Caco-2 (cell line): ENCODE measurements at regions of chr5 and their contacts with region 1.

Region 1: GRCh38 chr5:73783828-73784227 is 157.8 kb downstream of the ARHGEF28 start:
- DNase-seq: no peak
- H3K4me3 ChIP-seq: no peak overlapping the region
- H3K4me3 Mint-ChIP-seq: no peak overlapping the region
- H3K27ac Mint-ChIP-seq: no peak overlapping the region
- H3K4me1 ChIP-seq: no peaks in the 10 kb centered on the region
- H3K4me1 Mint-ChIP-seq: no peaks in the 10 kb centered on the region
- H3K27me3 ChIP-seq: no peaks in the 10 kb centered on the region
- H3K27me3 Mint-ChIP-seq: no peaks in the 10 kb centered on the region
- CTCF ChIP-seq: peak in 1 of 2 experiments; percentile 40

Region 2: GRCh38 chr5:73354406-73354805 is 429.4 kb before region 1 on chr5:
- CTCF ChIA-PET with region 1: no interaction called
- POLR2A ChIA-PET with region 1: no interaction called
- intact Hi-C with region 1: no loop called
- DNase-seq: no peak
- H3K4me3 ChIP-seq: no peak overlapping the region
- H3K4me3 Mint-ChIP-seq: no peak overlapping the region
- H3K27ac Mint-ChIP-seq: no peak overlapping the region
- H3K4me1 ChIP-seq: no peaks in the 10 kb centered on the region
- H3K4me1 Mint-ChIP-seq: no peaks in the 10 kb centered on the region
- H3K27me3 ChIP-seq: no peaks in the 10 kb centered on the region; the same call in 1 of the 2 replicates
- H3K27me3 Mint-ChIP-seq: peaks cover 15% of the 10 kb centered on the region
- CTCF ChIP-seq: no peak

Region 3: GRCh38 chr5:73722231-73722630 is 61.6 kb before region 1 on chr5:
- CTCF ChIA-PET with region 1: no interaction called
- POLR2A ChIA-PET with region 1: no interaction called
- intact Hi-C with region 1: loop called (anchors 10 kb)
- DNase-seq: no peak
- H3K4me3 ChIP-seq: no peak overlapping the region
- H3K4me3 Mint-ChIP-seq: no peak overlapping the region
- H3K27ac Mint-ChIP-seq: no peak overlapping the region
- H3K4me1 ChIP-seq: no peaks in the 10 kb centered on the region
- H3K4me1 Mint-ChIP-seq: no peaks in the 10 kb centered on the region
- H3K27me3 ChIP-seq: no peaks in the 10 kb centered on the region
- H3K27me3 Mint-ChIP-seq: peaks cover 4% of the 10 kb centered on the region
- CTCF ChIP-seq: no peak

Region 4: DNA sequence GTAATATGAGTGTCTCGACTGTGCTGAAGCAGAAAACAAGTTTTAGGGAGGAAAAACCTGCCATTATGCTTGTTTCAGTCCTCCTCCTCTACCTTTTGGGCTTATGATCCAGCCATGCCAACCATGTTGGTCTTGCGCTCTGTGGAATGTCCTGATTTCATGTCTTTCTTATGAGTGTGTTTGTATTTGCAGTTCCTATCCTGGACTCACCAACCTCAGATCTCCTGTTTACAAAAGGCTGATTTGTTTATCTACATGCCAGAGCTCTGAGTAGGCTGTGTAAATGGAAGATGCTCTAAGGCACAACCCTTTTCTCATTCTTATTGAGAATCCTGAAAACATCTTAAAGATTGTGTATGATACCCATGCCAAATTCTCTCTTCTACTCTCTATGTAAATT is 19.2 kb before region 1 on chr5:
- CTCF ChIA-PET with region 1: no interaction called
- POLR2A ChIA-PET with region 1: no interaction called
- intact Hi-C with region 1: no loop called
- DNase-seq: no peak
- H3K4me3 ChIP-seq: no peak overlapping the region
- H3K4me3 Mint-ChIP-seq: no peak overlapping the region
- H3K27ac Mint-ChIP-seq: peak overlapping the region; percentile 5
- H3K4me1 ChIP-seq: no peaks in the 10 kb centered on the region
- H3K4me1 Mint-ChIP-seq: no peaks in the 10 kb centered on the region
- H3K27me3 ChIP-seq: no peaks in the 10 kb centered on the region
- H3K27me3 Mint-ChIP-seq: no peaks in the 10 kb centered on the region
- CTCF ChIP-seq: no peak

Region 5: DNA sequence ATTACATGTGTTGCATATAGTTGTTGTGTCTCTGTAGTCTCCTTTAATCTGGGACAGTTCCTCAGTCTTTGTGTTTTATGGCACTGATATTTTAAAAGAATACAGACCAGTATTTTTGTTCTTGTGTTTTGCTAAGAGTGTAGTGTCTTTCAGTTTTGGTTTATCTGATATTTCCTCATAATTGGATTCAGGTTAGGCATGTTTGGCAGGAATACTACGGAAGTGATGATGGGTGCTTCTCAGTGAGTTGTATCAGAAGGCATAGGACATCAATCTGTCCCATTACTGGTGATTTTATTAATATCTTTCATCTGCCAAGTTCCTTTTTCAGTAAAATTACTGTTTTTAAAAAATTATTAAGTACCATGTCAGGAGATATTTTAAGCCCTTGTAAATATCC is 55.1 kb after region 1 on chr5:
- CTCF ChIA-PET with region 1: no interaction called
- POLR2A ChIA-PET with region 1: no interaction called
- intact Hi-C with region 1: no loop called
- DNase-seq: no peak
- H3K4me3 ChIP-seq: no peak overlapping the region
- H3K4me3 Mint-ChIP-seq: no peak overlapping the region
- H3K27ac Mint-ChIP-seq: no peak overlapping the region
- H3K4me1 ChIP-seq: no peaks in the 10 kb centered on the region
- H3K4me1 Mint-ChIP-seq: no peaks in the 10 kb centered on the region
- H3K27me3 ChIP-seq: no peaks in the 10 kb centered on the region
- H3K27me3 Mint-ChIP-seq: no peaks in the 10 kb centered on the region
- CTCF ChIP-seq: no peak

Region 6: DNA sequence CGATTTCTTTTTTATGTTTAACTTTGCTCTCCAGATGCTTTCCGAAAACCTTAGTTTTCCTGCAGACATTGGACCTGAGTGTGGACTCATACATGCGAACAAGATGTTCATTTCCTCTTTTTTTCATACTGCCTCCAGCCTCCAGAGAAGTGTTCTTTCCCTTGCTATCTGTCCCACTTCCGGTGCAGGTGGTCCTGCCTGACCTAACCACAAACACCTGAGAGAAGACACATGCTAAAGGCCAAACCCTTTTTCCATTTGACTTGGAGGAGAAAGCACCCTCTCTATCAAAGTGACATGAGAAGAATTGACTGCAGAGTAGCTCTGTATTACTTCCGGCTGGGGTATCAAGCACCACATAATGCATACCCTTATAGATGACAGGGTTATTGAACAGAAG is 176.2 kb after region 1 on chr5:
- CTCF ChIA-PET with region 1: no interaction called
- POLR2A ChIA-PET with region 1: no interaction called
- intact Hi-C with region 1: no loop called
- DNase-seq: no peak
- H3K4me3 ChIP-seq: no peak overlapping the region
- H3K4me3 Mint-ChIP-seq: no peak overlapping the region
- H3K27ac Mint-ChIP-seq: no peak overlapping the region
- H3K4me1 ChIP-seq: no peaks in the 10 kb centered on the region
- H3K4me1 Mint-ChIP-seq: no peaks in the 10 kb centered on the region
- H3K27me3 ChIP-seq: no peaks in the 10 kb centered on the region
- H3K27me3 Mint-ChIP-seq: peaks cover 2% of the 10 kb centered on the region
- CTCF ChIP-seq: no peak